Caco-2 (cell line): ENCODE measurements at regions of chr1 and their contacts with region 1.

Region 1: DNA sequence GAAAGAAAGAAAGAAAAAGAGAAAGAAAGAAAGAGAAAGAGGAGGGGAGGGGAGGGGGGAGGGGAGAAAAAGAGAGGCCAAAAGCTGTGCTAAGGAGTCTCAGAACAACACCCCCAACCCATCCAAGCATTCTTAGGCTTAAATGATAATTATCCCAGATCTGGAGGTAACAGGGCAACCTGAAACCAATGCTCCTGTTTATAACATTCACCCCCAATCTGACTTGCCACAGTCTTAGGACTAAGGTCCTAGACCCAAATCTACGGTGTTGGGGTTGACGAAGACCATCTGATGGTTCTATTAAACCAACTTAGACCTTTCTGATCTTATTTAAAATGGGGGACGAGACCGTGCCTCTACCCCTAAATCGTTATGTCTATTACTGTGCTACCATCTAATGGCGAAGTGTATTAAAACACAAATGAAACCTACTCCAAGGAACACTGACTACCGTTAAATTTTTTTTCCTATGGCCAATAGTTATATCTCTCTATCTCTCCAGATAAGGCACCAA is 119.3 kb upstream of the CDC42BPA start:
- DNase-seq: peak in 1 of 2 experiments; percentile 55
- H3K4me3 ChIP-seq: peak overlapping the region; percentile 22
- H3K4me3 Mint-ChIP-seq: peak overlapping the region; percentile 39
- H3K27ac Mint-ChIP-seq: peak overlapping the region; percentile 11
- H3K4me1 ChIP-seq: no peaks in the 10 kb centered on the region
- H3K4me1 Mint-ChIP-seq: peaks cover 11% of the 10 kb centered on the region
- H3K27me3 ChIP-seq: no peaks in the 10 kb centered on the region
- H3K27me3 Mint-ChIP-seq: no peaks in the 10 kb centered on the region
- CTCF ChIP-seq: peak; percentile 25 to 42

Region 2: GRCh38 chr1:226912587-226913176 is 524.9 kb before region 1 on chr1:
- CTCF ChIA-PET with region 1: no interaction called
- POLR2A ChIA-PET with region 1: no interaction called
- intact Hi-C with region 1: loop called (anchors 1 kb)
- DNase-seq: peak; percentile 82 to 85
- H3K4me3 ChIP-seq: no peak overlapping the region
- H3K4me3 Mint-ChIP-seq: no peak overlapping the region
- H3K27ac Mint-ChIP-seq: no peak overlapping the region
- H3K4me1 ChIP-seq: no peaks in the 10 kb centered on the region
- H3K4me1 Mint-ChIP-seq: no peaks in the 10 kb centered on the region
- H3K27me3 ChIP-seq: no peaks in the 10 kb centered on the region
- H3K27me3 Mint-ChIP-seq: no peaks in the 10 kb centered on the region
- CTCF ChIP-seq: peak; percentile 71 to 91

Region 3: GRCh38 chr1:227006226-227006796 is 431.2 kb before region 1 on chr1:
- CTCF ChIA-PET with region 1: no interaction called
- POLR2A ChIA-PET with region 1: no interaction called
- intact Hi-C with region 1: loop called (anchors 10 kb)
- DNase-seq: no peak
- H3K4me3 ChIP-seq: no peak overlapping the region
- H3K4me3 Mint-ChIP-seq: no peak overlapping the region
- H3K27ac Mint-ChIP-seq: no peak overlapping the region
- H3K4me1 ChIP-seq: no peaks in the 10 kb centered on the region
- H3K4me1 Mint-ChIP-seq: no peaks in the 10 kb centered on the region
- H3K27me3 ChIP-seq: no peaks in the 10 kb centered on the region
- H3K27me3 Mint-ChIP-seq: no peaks in the 10 kb centered on the region
- CTCF ChIP-seq: no peak

Region 4: DNA sequence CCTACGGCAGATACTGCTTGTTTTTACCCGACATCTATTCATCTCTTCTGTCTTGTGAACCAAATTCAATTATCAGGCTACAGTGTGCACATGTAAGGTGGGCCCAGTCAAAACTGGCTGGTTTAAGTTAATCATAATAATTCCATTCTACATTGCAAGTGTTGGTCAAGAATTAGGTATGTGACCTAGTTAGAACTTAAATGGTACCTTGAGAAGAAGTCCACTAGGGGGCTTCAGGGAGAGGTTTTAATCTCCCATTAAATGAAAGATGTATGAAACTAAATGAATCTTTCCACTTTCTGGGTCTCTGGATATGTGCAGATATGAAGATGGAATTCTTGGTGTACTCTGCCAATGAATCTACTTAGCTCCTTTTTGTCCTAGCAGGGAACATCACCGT is 306.4 kb before region 1 on chr1:
- CTCF ChIA-PET with region 1: no interaction called
- POLR2A ChIA-PET with region 1: no interaction called
- intact Hi-C with region 1: loop called (anchors 1 kb)
- DNase-seq: no peak
- H3K4me3 ChIP-seq: no peak overlapping the region
- H3K4me3 Mint-ChIP-seq: no peak overlapping the region
- H3K27ac Mint-ChIP-seq: no peak overlapping the region
- H3K4me1 ChIP-seq: peaks cover 19% of the 10 kb centered on the region
- H3K4me1 Mint-ChIP-seq: peaks cover 27% of the 10 kb centered on the region
- H3K27me3 ChIP-seq: no peaks in the 10 kb centered on the region
- H3K27me3 Mint-ChIP-seq: no peaks in the 10 kb centered on the region
- CTCF ChIP-seq: peak; percentile 40 to 47

Region 5: DNA sequence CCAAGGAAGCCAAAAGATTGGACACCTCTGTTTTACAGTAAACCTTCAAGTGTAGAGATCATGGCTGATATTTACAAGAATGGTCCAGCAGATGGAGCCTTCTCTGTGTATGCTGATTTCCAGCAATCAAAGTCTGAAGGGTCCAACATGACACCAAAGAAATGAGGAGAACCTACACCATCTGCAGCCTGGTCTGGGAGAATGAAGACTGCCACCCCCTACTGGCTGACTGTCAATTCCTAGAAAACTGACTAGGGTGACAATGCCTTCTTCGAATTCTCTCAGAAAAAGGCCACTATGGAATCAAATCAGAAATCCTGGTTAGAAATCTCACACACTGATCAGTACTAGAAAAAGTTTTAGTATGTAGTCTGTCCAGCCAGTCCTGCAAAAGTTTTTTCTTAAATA is 202.6 kb before region 1 on chr1:
- CTCF ChIA-PET with region 1: no interaction called
- POLR2A ChIA-PET with region 1: no interaction called
- intact Hi-C with region 1: loop called (anchors 1 kb)
- DNase-seq: peak; percentile 74 to 78
- H3K4me3 ChIP-seq: no peak overlapping the region
- H3K4me3 Mint-ChIP-seq: no peak overlapping the region
- H3K27ac Mint-ChIP-seq: no peak overlapping the region
- H3K4me1 ChIP-seq: no peaks in the 10 kb centered on the region
- H3K4me1 Mint-ChIP-seq: peaks cover 10% of the 10 kb centered on the region
- H3K27me3 ChIP-seq: no peaks in the 10 kb centered on the region
- H3K27me3 Mint-ChIP-seq: no peaks in the 10 kb centered on the region
- CTCF ChIP-seq: peak; percentile 64 to 67

Region 6: DNA sequence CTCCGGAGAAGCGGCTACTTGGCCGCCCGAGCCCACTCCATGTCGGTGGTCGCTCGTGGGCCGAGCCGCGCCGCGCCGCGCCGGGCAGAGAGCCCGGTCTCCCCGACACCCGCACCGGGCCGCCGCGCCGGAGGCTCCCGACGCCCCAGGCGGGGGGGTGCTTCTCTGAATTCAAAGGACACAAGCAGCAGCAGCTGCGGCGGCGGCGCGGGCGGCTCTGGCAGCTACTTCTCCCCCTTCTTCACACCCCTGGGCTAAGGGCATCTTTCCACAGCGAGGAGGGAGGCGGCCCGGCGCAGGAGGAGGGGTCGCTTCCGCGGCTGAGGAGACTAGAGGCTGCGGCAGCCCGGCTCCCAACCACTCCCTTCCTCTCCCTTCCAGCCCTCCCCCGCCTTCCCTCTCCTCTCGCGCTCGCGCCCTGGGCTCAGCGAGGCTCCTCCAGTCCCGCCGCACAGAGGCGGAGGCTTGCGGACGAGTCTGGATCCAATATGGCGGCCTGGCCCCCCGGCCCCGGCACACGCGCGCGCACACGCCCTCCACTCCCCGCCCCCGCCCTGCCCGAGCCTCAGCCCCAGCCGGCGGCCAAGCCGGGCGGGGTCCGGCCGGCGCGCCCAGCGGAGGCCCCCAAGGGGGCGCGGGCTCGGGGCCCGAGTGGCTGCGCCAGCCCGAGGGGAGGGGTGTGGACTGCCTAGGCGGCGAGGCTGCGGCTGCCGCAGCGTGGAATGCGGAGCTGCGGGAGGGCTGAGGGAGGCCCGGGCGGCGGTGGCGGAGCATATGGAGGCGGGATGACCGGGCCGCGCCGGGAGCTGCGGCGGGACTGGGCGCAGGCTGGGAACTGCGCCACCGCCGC is 119.3 kb before region 1 on chr1 and contains the start of gene CDC42BPA:
- CTCF ChIA-PET with region 1: no interaction called
- POLR2A ChIA-PET with region 1: no interaction called
- intact Hi-C with region 1: loop called (anchors 2 kb)
- DNase-seq: peak; percentile 89 to 91
- H3K4me3 ChIP-seq: peak within 1 kb of the TSS; percentile 64
- H3K4me3 Mint-ChIP-seq: peak within 1 kb of the TSS; percentile 97
- H3K27ac Mint-ChIP-seq: peak within 1 kb of the TSS; percentile 94
- H3K4me1 ChIP-seq: no peaks in the 10 kb centered on the region
- H3K4me1 Mint-ChIP-seq: no peaks in the 10 kb centered on the region
- H3K27me3 ChIP-seq: no peaks in the 10 kb centered on the region
- H3K27me3 Mint-ChIP-seq: no peaks in the 10 kb centered on the region
- CTCF ChIP-seq: peak in 1 of 2 experiments; percentile 1
- total RNA-seq, gene CDC42BPA: 38.3 and 39.8 TPM in 2 replicates

Region 7: GRCh38 chr1:227465256-227465655 is 27.7 kb after region 1 on chr1:
- CTCF ChIA-PET with region 1: no interaction called
- POLR2A ChIA-PET with region 1: no interaction called
- intact Hi-C with region 1: no loop called
- DNase-seq: no peak
- H3K4me3 ChIP-seq: no peak overlapping the region
- H3K4me3 Mint-ChIP-seq: no peak overlapping the region
- H3K27ac Mint-ChIP-seq: no peak overlapping the region
- H3K4me1 ChIP-seq: no peaks in the 10 kb centered on the region
- H3K4me1 Mint-ChIP-seq: no peaks in the 10 kb centered on the region
- H3K27me3 ChIP-seq: peaks cover 1% of the 10 kb centered on the region
- H3K27me3 Mint-ChIP-seq: no peaks in the 10 kb centered on the region
- CTCF ChIP-seq: no peak